Transverse colon (tissue), 4 donors: ENCODE measurements at regions of chr22 and their contacts with region 1.

Region 1: DNA sequence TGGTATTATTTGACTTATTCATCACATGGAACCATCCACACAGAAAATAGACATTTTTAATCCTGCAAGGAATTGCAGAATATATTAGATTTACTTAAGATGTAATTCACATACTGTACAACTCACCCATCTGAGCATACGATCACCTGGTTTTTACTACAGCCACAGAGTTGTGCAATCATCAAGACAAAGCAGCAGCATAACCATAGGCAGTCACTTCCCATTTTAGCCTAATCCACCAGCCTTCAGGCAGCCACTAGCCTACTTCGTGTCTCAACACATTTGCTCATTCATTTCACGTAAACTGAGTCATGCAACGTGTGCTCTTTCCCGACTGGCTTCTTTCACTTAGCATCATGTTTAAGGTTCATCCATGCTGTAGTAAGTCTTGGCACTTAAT is 23.0 kb downstream of the PIWIL3 start:
- DNase-seq: no peak
- H3K4me3 ChIP-seq: no peak overlapping the region
- H3K27ac ChIP-seq: no peak overlapping the region
- H3K4me1 ChIP-seq: no peaks in the 10 kb centered on the region
- H3K27me3 ChIP-seq: peaks cover 11% of the 10 kb centered on the region
- CTCF ChIP-seq: no peak
- EP300 ChIP-seq: no peak
- POLR2A ChIP-seq: no peak

Region 2: DNA sequence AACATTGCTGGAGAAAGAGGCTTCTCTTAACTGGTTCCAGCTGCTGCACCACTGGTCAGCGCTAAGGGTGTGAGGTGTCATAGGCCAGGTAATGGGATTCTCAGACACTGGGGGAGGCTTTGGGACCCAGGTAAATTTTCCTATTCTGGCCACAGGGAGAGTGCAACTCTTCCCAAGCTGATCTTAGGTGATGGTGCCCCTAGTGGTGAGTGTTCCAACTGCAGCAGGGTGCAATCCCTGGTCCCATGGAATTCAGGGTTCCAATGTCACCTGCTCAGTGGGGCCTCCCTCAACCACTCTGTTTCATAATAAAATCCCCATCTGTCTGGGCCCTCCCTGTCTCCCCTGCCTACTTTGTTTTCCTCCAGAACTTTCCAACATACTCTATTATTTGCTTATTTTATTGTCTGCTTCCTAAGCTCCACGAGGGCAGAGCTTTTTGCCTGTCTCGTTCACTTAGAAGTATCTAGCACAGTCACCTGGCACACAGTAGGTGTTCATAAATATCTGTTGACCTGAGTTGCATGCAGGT is 51.6 kb after region 1 on chr22:
- in situ Hi-C with region 1: no loop called
- intact Hi-C with region 1: loop called (anchors 2 kb)
- DNase-seq: peak; percentile 71
- H3K4me3 ChIP-seq: no peak overlapping the region
- H3K27ac ChIP-seq: no peak overlapping the region
- H3K4me1 ChIP-seq: peaks cover 0 to 23% (median 8%) of the 10 kb centered on the region in 4 donors
- H3K27me3 ChIP-seq: no peaks in the 10 kb centered on the region
- CTCF ChIP-seq: peak; percentile 81 to 96 (median 96)
- EP300 ChIP-seq: no peak
- POLR2A ChIP-seq: no peak